Common myeloid progenitor, CD34-positive (primary cell): ENCODE measurements at regions of chr9 and their contacts with region 1.

Region 1: GRCh38 chr9:123033864-123034601 is 566 bp downstream of the GPR21 start:
- DNase-seq: peak; percentile 74 to 93 (median 87)
- H3K4me3 ChIP-seq: peak overlapping the region; percentile 58 to 88 (median 80)
- H3K27ac ChIP-seq: peak overlapping the region; percentile 79 to 92
- H3K4me1 ChIP-seq: peaks cover 42 to 91% (median 59%) of the 10 kb centered on the region in 4 experiments
- H3K27me3 ChIP-seq: no peaks in the 10 kb centered on the region

Region 2: DNA sequence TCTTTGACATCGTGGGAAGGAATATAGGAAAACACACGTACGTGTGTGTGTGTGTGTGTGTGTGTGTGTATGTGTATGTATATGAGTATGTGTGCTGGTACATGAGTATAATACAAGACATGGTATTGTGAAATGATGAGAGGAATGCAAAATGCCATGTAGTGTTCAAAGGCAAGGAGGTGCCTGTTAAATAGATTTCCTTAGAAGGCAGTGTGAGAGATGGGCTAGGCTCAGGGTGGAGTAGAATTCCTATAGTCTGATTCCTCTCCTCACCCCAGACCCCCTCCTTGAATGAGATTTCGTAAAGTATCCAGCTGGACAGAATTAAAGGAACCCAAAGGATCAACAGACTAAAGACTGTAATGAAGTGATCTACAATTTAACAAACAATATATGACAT is 10.6 kb after region 1 on chr9:
- CTCF ChIA-PET with region 1: interaction called, 48 read pairs
- POLR2A ChIA-PET with region 1: interaction called, 14 read pairs
- DNase-seq: no peak
- H3K4me3 ChIP-seq: peak overlapping the region in 2 of 7 experiments; percentile 30 to 34
- H3K27ac ChIP-seq: peak overlapping the region in 1 of 2 experiments; percentile 41
- H3K4me1 ChIP-seq: peaks cover 9 to 88% (median 41%) of the 10 kb centered on the region in 4 experiments
- H3K27me3 ChIP-seq: no peaks in the 10 kb centered on the region

Region 3: GRCh38 chr9:123049589-123050222 is 15.7 kb after region 1 on chr9:
- CTCF ChIA-PET with region 1: interaction called, 48 read pairs
- POLR2A ChIA-PET with region 1: interaction called, 14 read pairs
- DNase-seq: peak in 1 of 3 donors; percentile 31
- H3K4me3 ChIP-seq: peak overlapping the region in 3 of 7 experiments; percentile 11 to 43 (median 29)
- H3K27ac ChIP-seq: peak overlapping the region; percentile 36 to 47
- H3K4me1 ChIP-seq: peaks cover 3 to 85% (median 27%) of the 10 kb centered on the region in 4 experiments
- H3K27me3 ChIP-seq: no peaks in the 10 kb centered on the region